AG04449 (cell line): ENCODE measurements at regions of chr18 and their contacts with region 1.

Region 1: DNA sequence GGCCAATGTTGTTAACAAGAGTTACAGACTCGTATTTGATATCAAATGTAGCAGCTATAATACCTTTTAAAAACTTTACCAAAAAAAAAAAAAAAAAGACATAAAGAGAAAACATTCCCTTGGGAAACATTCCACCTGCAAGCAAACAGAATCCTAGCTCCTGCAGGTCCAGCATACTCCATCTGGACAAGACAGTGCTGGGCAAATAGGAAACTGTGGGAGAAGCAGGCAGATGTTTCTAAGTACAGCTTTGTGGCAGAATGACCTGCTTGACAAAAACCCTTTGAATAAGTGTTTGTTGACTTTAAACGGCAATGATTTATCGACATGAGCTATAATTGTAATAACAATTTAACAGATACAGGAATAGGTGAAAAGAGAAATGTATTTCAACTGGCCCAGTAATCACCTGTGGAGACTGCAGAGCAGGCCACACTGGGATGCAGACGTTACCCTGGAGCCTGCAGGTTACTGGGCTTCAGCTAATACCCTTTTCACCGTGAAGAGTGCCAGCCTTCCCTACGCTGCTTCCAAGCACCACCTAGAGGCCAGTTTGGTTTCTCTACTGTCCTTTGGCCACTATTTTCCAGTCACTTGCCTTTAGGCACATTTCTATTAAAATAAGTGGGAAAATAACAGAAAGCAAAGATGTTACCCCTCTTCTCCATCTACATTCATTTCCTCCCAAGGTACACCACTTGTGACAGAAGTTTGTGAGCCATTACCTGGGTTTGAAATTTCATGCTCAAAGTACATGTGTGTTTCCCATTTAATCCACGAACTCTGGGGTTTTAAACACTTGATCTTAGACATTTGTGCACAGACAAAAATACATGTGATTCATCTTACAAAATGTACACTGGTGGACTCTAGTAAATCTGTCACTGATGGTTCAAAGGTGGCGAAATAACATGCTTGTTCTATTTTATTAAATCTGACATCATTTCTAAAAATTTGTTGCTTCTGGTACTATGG is 96.9 kb upstream of the ZNF397 start:
- DNase-seq: no peak
- H3K4me3 ChIP-seq: no peak overlapping the region
- CTCF ChIP-seq: peak; percentile 79

Region 2: GRCh38 chr18:34867520-34867919 is 276.4 kb before region 1 on chr18:
- CTCF ChIA-PET with region 1: interaction called, 39 read pairs
- POLR2A ChIA-PET with region 1: no interaction called
- DNase-seq: no peak
- H3K4me3 ChIP-seq: no peak overlapping the region
- CTCF ChIP-seq: peak; percentile 27

Region 3: GRCh38 chr18:34890486-34891085 is 253.3 kb before region 1 on chr18:
- CTCF ChIA-PET with region 1: no interaction called
- POLR2A ChIA-PET with region 1: no interaction called
- DNase-seq: no peak
- H3K4me3 ChIP-seq: no peak overlapping the region
- CTCF ChIP-seq: no peak

Region 4: GRCh38 chr18:35005963-35006577 is 137.8 kb before region 1 on chr18:
- CTCF ChIA-PET with region 1: interaction called, 213 read pairs
- POLR2A ChIA-PET with region 1: no interaction called
- DNase-seq: no peak
- H3K4me3 ChIP-seq: no peak overlapping the region
- CTCF ChIP-seq: peak; percentile 31

Region 5: DNA sequence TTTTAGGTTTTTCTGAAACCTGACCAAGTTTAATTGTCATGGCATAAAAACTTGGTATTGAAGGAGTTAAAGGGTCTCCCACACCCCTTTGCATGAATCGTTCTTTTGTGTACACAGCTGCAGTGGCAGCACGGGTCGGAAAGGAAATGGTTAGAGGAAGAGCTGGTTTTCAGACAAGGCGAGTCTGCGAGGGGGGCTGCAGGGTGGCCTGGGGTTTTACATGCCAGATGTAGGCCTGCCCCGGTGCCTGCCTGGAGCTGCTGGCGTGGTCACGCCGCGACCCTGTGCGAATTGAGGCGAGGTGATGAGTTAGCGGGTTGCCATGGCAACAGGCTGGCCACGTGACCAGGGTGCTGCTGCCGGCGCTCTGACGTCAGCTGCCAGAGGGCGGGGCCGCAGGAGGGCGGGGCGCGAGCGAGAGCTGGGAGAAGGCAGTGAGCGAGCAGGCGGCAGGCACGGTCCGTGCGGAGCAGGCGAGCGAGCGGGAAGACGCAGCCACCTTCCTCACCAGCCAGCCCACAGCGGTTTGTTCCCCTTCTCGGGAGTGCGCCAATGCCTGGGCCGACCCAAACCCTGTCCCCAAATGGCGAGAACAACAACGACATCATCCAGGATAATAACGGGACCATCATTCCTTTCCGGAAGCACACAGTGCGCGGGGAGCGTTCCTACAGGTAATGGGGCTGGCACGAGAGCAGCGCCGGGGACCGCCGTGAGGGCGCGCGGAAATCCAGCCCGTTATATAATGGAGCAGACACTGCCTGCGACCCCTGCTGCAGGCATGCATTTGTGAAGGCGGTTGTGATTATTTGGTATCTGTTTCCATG is 102.7 kb before region 1 on chr18 and contains the start of gene MAPRE2:
- CTCF ChIA-PET with region 1: interaction called, 16 read pairs
- POLR2A ChIA-PET with region 1: no interaction called
- DNase-seq: peak; percentile 75
- H3K4me3 ChIP-seq: peak within 1 kb of the TSS; percentile 98
- CTCF ChIP-seq: no peak

Region 6: DNA sequence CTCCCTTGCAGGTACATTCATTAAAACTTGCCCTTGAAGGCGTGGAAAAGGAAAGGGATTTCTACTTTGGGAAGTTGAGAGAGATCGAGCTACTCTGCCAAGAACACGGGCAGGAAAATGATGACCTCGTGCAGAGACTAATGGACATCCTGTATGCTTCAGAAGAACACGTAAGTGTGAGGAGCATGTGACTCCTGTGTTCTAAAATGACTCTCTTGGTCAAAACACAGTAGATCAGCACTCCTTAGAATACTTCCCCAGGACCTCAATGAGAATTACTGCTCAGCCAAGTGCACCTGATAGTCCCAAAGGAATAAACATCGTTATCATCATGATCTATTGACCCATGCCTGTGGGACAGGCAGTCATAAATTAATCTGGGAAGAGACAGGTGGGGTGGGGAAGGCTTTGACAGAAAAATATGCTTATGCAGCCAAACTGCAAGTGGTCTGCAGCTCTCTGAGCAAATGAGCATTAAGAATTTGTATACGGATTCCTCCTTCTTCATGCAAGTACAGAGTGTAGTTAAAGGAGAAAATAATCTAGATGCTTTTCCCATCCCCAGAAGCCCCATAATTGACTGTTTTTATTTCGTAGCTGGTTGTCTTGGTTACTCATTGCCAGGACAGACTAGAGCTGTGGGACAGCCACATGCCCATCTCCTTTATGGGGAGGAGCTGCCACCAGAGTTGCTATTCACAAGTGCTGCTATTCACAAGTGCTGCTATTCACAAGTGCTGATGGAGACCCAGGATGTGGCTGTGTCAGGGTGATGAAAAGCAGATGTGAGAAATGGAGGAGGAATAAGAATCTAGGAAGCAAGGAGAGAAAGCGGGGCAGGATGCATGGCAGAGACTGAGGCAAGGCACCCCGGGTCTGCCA is 11.6 kb before region 1 on chr18:
- CTCF ChIA-PET with region 1: interaction called, 35 read pairs
- POLR2A ChIA-PET with region 1: no interaction called
- DNase-seq: no peak
- H3K4me3 ChIP-seq: no peak overlapping the region
- CTCF ChIP-seq: no peak

Region 7: DNA sequence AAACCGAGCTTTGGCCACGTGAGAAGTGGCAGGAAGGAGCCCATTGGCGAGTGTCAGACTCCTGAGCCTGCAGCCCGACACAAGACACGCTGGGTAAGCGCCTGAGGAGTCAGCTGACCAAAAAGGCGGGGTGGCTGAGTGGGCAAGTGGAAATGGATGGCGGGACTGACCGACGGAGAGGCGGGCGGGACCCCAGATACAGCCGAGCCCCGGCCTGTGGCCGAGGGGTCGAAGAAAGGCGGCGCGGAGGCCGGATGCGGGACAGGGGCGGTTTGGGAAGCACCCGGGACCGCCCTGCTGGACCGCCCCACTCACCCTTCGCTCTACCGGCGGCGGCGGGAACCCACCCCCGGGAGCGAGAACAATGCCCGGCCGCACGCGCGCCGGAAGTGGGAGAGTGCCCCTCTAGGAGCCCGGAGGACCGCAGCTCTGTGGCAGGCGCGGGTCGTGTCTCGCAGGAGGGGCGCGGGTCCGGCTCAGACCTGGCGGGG is 123.3 kb after region 1 on chr18:
- CTCF ChIA-PET with region 1: no interaction called
- POLR2A ChIA-PET with region 1: no interaction called
- DNase-seq: no peak
- H3K4me3 ChIP-seq: peak overlapping the region; percentile 45
- CTCF ChIP-seq: no peak

Region 8: GRCh38 chr18:35386600-35387351 is 242.9 kb after region 1 on chr18:
- CTCF ChIA-PET with region 1: no interaction called
- POLR2A ChIA-PET with region 1: no interaction called
- DNase-seq: no peak
- H3K4me3 ChIP-seq: no peak overlapping the region
- CTCF ChIP-seq: peak; percentile 75